Lower leg skin (tissue), 4 donors: ENCODE measurements at regions of chr15 and their contacts with region 1.

Region 1: DNA sequence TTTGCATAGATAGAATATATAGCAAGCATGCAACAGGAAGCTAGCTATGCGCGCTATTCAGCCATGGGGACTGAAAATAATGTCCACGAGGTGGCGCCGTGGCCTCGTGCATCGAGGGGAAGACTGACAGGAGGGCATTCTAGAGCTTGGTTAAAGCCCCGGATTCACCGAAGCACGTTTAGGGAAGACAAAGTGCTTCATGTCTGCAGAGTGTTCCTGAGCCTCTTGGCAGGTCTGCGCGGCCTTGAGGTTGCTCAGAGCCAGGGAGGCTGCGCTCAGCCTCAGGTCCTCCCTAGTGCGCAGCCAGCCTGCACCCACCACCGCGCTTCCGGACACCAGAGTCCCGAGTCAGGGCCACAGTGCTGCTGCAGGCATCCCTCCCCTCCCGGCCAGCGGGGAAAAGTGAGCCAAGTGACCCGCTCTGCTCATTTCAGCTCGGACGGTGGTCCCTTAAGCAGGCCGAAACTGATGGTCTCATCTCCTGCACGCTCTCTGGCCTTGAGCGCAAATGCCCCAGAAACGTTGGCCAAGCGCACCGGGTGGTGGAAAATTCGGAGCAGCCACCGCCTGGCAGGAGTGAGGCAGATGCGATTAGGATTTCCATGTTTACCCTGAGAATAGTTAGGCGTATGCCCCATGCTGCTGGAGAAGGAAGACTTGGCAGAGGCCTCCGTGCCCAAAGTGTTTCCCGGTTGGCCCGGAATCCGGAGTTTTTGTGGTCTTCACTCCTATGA is 24.8 kb downstream of the GABRA5 start:
- DNase-seq: peak; percentile 27 to 89
- H3K4me3 ChIP-seq: no peak overlapping the region
- CTCF ChIP-seq: no peak
- POLR2A ChIP-seq: no peak

Region 2: GRCh38 chr15:27017168-27017809 is 125.7 kb after region 1 on chr15:
- intact Hi-C with region 1: loop called (anchors 10 kb)
- DNase-seq: peak in 1 of 2 donors; percentile 19
- H3K4me3 ChIP-seq: no peak overlapping the region
- CTCF ChIP-seq: no peak
- POLR2A ChIP-seq: no peak

Region 3: DNA sequence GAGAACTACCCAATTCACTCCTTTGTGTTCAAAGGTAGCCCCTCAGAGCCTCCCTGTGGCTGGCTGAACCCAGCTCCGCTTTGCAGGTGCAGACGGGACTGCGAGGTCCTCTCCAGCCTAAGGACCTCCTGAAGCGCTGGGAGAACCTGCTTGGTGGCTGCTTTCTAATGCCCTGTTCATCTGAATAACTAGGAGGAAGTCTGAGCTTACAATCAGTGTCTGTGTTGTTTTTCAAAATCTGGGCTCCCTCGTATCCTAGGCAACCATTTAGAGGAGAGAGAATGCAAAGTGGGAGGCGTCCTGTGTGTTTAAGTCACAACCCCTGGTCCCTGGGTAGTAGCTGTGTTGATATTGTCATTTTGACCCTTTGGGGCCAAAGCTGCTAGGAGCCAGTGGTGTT is 179.2 kb after region 1 on chr15:
- intact Hi-C with region 1: no loop called
- DNase-seq: no peak
- H3K4me3 ChIP-seq: no peak overlapping the region
- CTCF ChIP-seq: no peak
- POLR2A ChIP-seq: no peak

Region 4: DNA sequence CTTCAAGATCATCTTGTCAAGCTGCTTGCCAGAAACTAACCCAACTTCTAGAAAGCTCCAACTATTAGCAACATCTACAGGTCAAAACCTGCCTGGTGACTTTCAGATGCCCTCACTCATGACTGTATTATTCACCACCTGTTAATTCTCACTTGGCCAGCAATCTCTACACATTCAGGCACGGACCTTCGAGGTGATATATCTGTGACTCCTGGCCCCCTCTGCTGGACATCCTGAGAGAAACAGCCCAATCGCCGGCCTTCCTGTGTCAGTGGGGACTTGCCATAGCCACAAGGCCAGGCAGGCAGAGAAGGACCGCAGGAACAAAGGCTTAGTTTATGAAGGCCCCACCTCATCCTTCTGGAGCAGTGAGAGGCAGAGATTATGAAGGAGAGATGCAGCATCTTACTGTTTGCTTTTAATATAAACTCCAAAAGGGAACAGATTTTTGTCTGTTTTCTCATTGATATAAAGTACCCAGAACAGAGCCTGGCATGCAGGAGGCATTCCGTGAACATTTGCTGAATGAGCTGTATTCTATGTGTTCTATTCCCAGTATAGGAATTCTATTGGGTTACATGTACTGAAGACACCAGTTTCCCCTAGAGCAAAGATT is 1231.9 kb after region 1 on chr15:
- intact Hi-C with region 1: loop called (anchors 5 kb)
- DNase-seq: peak; percentile 64 to 92
- H3K4me3 ChIP-seq: no peak overlapping the region
- CTCF ChIP-seq: no peak
- POLR2A ChIP-seq: no peak